Activated CD4-positive, alpha-beta T cell treated with anti-CD3 and anti-CD28 coated beads for 36 hours (primary cell): ENCODE measurements at regions of chr5 and their contacts with region 1.

Region 1: GRCh38 chr5:139439013-139439903 is at the start of gene DNAJC18:
- DNase-seq: peak; percentile 97
- ATAC-seq: peak; percentile 86
- H3K4me3 Mint-ChIP-seq: peak within 1 kb of the TSS; percentile 94
- H3K27ac Mint-ChIP-seq: peak within 1 kb of the TSS; percentile 99
- H3K4me1 Mint-ChIP-seq: peaks cover 55% of the 10 kb centered on the region
- H3K27me3 Mint-ChIP-seq: no peaks in the 10 kb centered on the region
- total RNA-seq, gene DNAJC18: 33.1 to 35.6 TPM

Region 2: DNA sequence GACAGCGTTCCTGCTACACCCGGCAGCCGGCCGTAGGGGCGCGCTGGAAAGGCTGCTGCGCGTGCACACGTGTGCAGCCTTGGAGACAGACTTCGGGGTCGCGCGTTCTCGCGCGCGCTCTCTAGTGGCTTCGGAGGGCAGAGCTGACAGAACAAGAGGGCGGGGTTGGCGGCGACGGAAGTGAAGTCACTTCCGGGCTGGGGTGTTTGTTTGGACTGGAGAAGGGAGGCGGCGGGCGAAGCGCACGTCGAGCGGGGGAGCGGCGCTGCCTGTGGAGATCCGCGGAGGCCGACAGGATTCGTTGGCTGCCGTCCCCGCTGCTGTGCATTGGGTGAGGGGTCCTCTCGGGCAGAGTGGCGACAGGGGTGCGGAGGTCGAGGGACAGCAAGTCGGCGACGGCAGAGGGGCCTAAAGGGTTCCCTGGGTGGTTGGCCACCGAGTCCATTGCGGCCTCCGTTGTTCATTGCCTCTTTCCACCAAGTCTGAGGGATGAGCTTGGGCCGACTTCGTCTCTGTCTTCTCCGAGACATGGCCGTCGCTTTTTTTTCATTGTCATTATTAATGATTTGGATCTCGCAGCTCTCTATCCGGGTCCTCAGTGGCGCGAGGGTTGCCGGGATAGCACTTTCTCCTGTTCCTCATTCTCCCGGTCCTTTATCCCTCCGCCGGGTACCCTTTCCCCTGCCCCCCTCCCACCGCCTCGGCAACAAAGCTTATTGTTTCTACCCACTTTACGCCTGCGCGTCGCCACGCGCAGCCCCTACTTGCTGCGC is 97.4 kb before region 1 on chr5 and contains the start of gene PAIP2:
- CTCF ChIA-PET with region 1: no interaction called
- POLR2A ChIA-PET with region 1: interaction called, 5 read pairs
- intact Hi-C with region 1: loop called in 1 of 2 experiments (anchors 1 kb)
- DNase-seq: peak; percentile 99
- ATAC-seq: peak; percentile 88
- H3K4me3 Mint-ChIP-seq: peak within 1 kb of the TSS; percentile 88
- H3K27ac Mint-ChIP-seq: peak within 1 kb of the TSS; percentile 94
- H3K4me1 Mint-ChIP-seq: peaks cover 53% of the 10 kb centered on the region
- H3K27me3 Mint-ChIP-seq: no peaks in the 10 kb centered on the region
- total RNA-seq, gene PAIP2: 101 to 126 TPM

Region 3: DNA sequence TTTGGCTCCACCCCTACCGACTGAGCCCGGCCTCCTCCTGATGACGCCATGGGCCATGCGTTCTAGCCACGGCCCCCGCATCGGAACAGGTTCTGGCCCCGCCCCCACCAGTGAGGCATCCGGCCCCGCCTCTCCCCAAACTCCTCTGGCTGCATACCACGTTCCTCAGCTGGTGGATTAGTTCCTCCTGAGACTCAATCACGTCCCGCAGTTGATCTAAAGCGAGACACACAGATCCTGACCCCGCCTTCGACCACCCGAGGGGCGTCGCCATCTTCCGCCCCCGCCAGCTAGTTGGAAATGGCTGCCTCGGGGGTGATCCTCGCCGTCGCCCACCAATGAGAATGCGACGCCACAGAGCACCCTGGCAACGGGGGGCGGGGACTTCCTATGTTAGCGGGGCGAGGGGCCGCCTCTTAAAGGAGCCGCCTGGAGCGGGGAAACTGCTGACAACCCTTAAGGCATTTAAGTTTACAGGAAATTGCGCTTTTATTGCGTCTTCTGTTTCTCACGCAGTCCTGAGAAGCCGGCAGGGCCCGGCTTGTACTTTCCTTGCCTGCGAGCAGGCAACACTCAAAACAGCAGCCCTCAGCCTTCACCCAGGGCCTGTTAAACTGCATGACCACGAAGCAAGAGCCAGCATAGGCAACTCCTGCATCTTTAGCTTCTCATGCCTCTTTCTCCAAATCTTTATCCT is 35.3 kb before region 1 on chr5 and contains the start of gene SPATA24:
- CTCF ChIA-PET with region 1: interaction called, 3 read pairs
- POLR2A ChIA-PET with region 1: no interaction called
- intact Hi-C with region 1: loop called in 1 of 2 experiments (anchors 1 kb)
- DNase-seq: peak; percentile 100
- ATAC-seq: peak; percentile 93
- H3K4me3 Mint-ChIP-seq: peak within 1 kb of the TSS; percentile 79
- H3K27ac Mint-ChIP-seq: peak within 1 kb of the TSS; percentile 99
- H3K4me1 Mint-ChIP-seq: peaks cover 37% of the 10 kb centered on the region
- H3K27me3 Mint-ChIP-seq: no peaks in the 10 kb centered on the region
- total RNA-seq, gene SPATA24: 4.6 to 5.9 TPM

Region 4: DNA sequence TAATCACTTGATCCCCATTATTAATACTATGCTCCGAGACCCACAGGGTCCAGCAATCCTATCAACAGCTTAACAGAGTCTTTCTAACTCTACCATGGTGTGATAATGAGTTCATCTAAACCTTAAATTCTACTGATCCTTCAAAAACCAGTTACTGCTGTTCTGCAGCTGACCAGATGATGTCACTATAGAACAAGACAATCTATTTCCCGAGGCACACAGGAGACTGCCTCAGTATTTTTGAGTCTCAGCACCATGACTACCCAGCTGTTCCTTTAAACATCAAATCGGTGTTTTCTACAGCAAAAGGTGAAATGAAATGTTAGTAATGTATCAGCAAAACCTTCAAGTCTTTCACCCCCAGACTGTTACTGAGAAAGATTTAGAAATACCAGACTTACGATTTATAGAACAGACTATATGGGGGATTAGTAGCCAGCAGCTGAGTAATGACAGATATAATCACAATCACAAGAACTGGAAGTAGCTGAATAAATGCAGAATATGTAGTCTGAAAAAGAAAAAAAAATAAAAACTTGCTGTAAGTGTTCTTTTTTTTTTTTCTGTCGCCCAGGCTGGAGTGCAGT is 16.9 kb before region 1 on chr5:
- CTCF ChIA-PET with region 1: interaction called, 18 read pairs
- POLR2A ChIA-PET with region 1: interaction called, 7 read pairs
- intact Hi-C with region 1: no loop called
- DNase-seq: peak; percentile 66
- ATAC-seq: peak; percentile 93
- H3K4me3 Mint-ChIP-seq: no peak overlapping the region
- H3K27ac Mint-ChIP-seq: no peak overlapping the region
- H3K4me1 Mint-ChIP-seq: peaks cover 5% of the 10 kb centered on the region
- H3K27me3 Mint-ChIP-seq: no peaks in the 10 kb centered on the region

Region 5: DNA sequence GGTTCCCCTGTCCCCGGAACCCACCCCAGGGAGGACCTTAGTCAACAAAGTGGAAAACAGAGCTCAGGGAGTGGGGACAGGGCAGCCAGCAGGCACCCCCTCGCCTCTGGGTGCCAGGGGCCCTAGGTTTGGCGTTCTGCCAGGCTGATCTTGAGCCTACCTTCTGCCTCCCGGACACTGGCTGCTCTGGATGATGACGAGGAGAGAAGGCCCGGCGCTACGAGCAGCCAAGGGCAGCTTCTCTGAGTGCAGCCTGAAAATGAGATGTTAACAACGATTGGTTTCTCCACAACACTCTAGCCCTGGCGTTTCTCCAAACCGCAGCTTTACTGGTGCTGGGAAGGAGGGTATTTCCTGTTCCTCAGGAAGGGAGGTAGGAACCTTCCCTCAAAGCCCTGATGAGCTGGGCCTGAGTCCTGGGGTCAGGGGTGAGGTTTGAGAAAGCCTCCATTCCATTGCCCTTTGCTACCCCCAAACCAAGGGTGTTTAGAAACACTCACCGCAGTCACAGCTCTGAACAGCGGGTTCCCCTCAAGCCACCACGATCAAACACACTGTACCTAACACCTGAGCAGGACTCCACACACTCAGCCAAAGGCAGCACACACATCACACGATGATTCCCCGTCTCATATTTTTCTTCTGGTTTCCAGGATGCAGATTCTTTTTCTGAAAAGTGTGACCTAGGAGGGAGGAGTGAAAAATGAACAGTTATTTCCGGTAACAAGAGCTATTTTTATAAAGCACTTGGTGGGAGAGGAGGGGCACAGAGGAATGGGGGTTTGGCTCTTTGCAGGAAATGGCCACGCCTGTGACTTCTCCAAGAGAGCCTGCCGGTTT is 43.0 kb after region 1 on chr5 and contains the start of gene STING1:
- CTCF ChIA-PET with region 1: interaction called, 11 read pairs
- POLR2A ChIA-PET with region 1: interaction called, 22 read pairs
- intact Hi-C with region 1: loop called (anchors 2 kb)
- DNase-seq: peak; percentile 84
- ATAC-seq: peak; percentile 64
- H3K4me3 Mint-ChIP-seq: peak within 1 kb of the TSS; percentile 88
- H3K27ac Mint-ChIP-seq: peak within 1 kb of the TSS; percentile 99
- H3K4me1 Mint-ChIP-seq: peaks cover 35% of the 10 kb centered on the region
- H3K27me3 Mint-ChIP-seq: no peaks in the 10 kb centered on the region
- total RNA-seq, gene STING1: 178 to 183 TPM

Region 6: GRCh38 chr5:139517683-139518564 is 78.7 kb after region 1 on chr5:
- CTCF ChIA-PET with region 1: interaction called, 21 read pairs
- POLR2A ChIA-PET with region 1: interaction called, 3 read pairs
- intact Hi-C with region 1: loop called in 1 of 2 experiments (anchors 1 kb)
- DNase-seq: peak; percentile 95
- ATAC-seq: peak; percentile 91
- H3K4me3 Mint-ChIP-seq: peak overlapping the region; percentile 72
- H3K27ac Mint-ChIP-seq: peak overlapping the region; percentile 91
- H3K4me1 Mint-ChIP-seq: peaks cover 30% of the 10 kb centered on the region
- H3K27me3 Mint-ChIP-seq: no peaks in the 10 kb centered on the region

Region 7: GRCh38 chr5:140107312-140108083 is 668.2 kb after region 1 on chr5:
- CTCF ChIA-PET with region 1: no interaction called
- POLR2A ChIA-PET with region 1: no interaction called
- intact Hi-C with region 1: loop called in 1 of 2 experiments (anchors 1 kb)
- DNase-seq: peak; percentile 96
- ATAC-seq: peak; percentile 90
- H3K4me3 Mint-ChIP-seq: peak overlapping the region; percentile 99
- H3K27ac Mint-ChIP-seq: peak overlapping the region; percentile 95
- H3K4me1 Mint-ChIP-seq: peaks cover 43% of the 10 kb centered on the region
- H3K27me3 Mint-ChIP-seq: peaks cover 3% of the 10 kb centered on the region